WTC11 (cell line): ENCODE measurements at regions of chr3 and their contacts with region 1.

Region 1: DNA sequence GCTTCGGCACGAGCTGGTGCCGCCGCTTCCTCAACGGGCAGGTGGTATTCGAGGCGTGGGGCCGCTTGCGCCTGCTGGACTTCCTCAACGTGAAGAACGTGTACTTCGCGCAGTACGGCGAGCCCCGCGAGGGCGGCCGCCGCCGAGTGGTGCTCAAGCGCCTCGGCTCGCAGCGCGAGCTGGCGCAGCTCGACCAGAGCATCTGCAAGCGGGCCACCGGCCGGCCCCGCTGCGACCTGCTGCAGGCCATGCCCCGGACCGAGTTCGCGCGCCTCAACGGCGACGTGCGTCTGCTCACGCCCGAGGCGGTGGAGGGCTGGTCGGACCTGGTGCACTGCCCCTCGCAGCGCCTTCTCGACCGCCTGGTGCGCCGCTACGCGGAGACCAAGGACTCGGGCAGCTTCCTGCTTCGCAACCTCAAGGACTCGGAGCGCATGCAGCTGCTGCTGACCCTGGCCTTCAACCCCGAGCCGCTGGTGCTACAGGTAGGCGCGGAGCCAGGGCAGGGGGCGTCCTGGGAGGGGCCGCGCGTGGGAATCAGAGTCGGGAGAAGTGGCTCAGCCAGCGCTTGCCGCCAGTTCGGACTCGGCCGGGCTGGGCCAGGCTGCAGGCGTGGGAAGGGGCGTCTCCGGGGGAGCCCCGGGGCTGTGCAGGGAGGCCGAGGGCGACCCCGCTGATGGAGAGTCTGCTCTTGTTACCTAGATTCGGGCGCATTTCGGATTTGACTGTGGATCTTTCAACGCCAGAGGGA is 1.1 kb downstream of the DIPK2A start:
- DNase-seq: peak; percentile 59
- ATAC-seq: peak; percentile 8
- H3K4me3 Mint-ChIP-seq: peak overlapping the region; percentile 93
- H3K27ac Mint-ChIP-seq: peak overlapping the region; percentile 79
- H3K4me1 Mint-ChIP-seq: peaks cover 45% of the 10 kb centered on the region
- H3K27me3 Mint-ChIP-seq: no peaks in the 10 kb centered on the region; the same call in none of the 2 replicates
- CTCF ChIP-seq: no peak

Region 2: DNA sequence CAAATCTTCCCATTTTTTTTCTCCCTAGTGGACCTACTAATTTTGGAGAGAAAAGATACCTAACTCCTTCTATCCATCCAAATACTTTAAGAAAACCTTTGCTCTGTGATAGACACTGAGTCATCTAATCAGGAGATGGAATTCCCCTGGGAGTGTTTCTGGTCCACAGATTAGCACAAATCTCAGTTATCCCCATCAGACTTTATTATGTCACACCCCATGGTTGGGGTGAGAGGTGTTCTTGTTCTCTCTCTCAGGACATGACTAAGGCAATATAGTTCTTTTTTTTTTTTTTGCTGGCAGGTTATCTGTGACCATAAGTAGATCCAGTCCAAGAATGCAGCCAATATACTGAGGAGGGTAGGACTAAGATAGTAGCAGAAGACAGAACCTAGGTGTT is 140.2 kb before region 1 on chr3:
- CTCF ChIA-PET with region 1: no interaction called
- POLR2A ChIA-PET with region 1: no interaction called
- DNase-seq: no peak
- ATAC-seq: no peak
- H3K4me3 Mint-ChIP-seq: no peak overlapping the region
- H3K27ac Mint-ChIP-seq: no peak overlapping the region
- H3K4me1 Mint-ChIP-seq: peaks cover 10% of the 10 kb centered on the region; the same call in 1 of the 2 replicates
- H3K27me3 Mint-ChIP-seq: no peaks in the 10 kb centered on the region
- CTCF ChIP-seq: no peak

Region 3: DNA sequence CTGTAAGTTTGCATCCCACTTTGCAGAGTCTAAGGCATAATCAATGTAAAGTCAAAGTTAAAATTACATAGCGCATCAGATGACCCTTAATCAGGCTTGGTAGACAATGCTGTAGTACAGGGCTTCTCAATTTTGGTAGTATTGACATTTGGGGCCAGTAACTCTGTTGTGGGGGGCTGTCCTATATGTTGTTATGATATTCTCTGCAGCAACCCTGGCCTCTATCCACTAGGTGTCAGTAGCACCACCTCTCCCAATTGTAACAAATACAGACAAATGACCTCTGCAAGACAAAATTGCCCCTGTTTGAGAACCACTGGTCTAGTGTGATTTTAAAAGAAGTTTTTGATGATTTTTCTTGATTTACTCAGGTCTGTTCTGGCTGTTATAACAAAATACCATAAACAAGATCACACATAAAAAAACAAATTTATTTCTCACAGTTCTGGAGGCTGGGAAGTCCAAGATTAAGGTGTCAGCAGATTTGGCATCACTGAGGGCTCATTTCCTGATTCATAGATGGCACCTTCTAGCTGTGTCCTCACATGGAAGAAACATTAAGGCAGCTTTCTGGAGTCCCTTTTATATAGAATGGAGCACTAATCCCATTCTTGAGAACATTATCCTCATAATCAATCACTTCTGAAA is 86.8 kb before region 1 on chr3:
- CTCF ChIA-PET with region 1: interaction called, 18 read pairs
- POLR2A ChIA-PET with region 1: interaction called, 10 read pairs
- DNase-seq: peak; percentile 20
- ATAC-seq: peak; percentile 65
- H3K4me3 Mint-ChIP-seq: no peak overlapping the region
- H3K27ac Mint-ChIP-seq: no peak overlapping the region
- H3K4me1 Mint-ChIP-seq: peaks cover 38% of the 10 kb centered on the region
- H3K27me3 Mint-ChIP-seq: peaks cover 5% of the 10 kb centered on the region; the same call in 1 of the 2 replicates
- CTCF ChIP-seq: peak; percentile 61

Region 4: GRCh38 chr3:144011251-144011799 is 38.6 kb after region 1 on chr3:
- CTCF ChIA-PET with region 1: interaction called, 6 read pairs
- POLR2A ChIA-PET with region 1: interaction called, 13 read pairs
- DNase-seq: no peak
- ATAC-seq: no peak
- H3K4me3 Mint-ChIP-seq: no peak overlapping the region
- H3K27ac Mint-ChIP-seq: no peak overlapping the region
- H3K4me1 Mint-ChIP-seq: 0 out of 2 replicates have a peak, but pooled peaks cover 3% of the 10 kb centered on the region
- H3K27me3 Mint-ChIP-seq: no peaks in the 10 kb centered on the region
- CTCF ChIP-seq: no peak